ENCODE measurements at regions of chr1 and their contacts with region 1.

Region 1: DNA sequence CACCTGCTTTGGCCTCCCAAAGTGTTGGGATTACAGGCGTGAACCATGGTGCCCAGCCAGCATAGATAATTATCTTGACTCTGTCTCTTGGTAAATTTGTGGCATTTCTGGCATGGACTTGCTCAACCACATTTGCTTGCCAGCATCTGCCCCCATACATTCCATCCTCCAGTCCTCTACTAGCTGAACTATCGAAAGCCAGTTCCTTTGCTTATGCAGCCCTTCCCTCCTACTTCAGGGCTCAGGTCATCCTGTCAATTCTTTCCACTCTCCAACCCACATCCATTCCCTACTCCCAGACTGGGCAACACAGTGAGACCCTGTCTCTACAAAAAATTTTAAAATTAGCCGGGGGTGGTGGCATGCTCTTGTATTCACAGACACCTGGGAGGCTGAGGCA is 13.0 kb upstream of the UQCRHL start:
- DNase-seq: no peak
- H3K4me3 ChIP-seq: no peak overlapping the region
- H3K4me3 Mint-ChIP-seq: no peak overlapping the region
- H3K27ac Mint-ChIP-seq: no peak overlapping the region
- H3K4me1 ChIP-seq: no peaks in the 10 kb centered on the region
- H3K4me1 Mint-ChIP-seq: no peaks in the 10 kb centered on the region
- H3K27me3 ChIP-seq: no peaks in the 10 kb centered on the region
- H3K27me3 Mint-ChIP-seq: no peaks in the 10 kb centered on the region
- CTCF ChIP-seq: no peak

Region 2: GRCh38 chr1:15788624-15789301 is 31.7 kb before region 1 on chr1:
- CTCF ChIA-PET with region 1: interaction called, 14 read pairs
- POLR2A ChIA-PET with region 1: no interaction called
- intact Hi-C with region 1: loop called (anchors 2 kb)
- DNase-seq: no peak
- H3K4me3 ChIP-seq: no peak overlapping the region
- H3K4me3 Mint-ChIP-seq: no peak overlapping the region
- H3K27ac Mint-ChIP-seq: peak overlapping the region; percentile 71
- H3K4me1 ChIP-seq: peaks cover 44% of the 10 kb centered on the region
- H3K4me1 Mint-ChIP-seq: peaks cover 33% of the 10 kb centered on the region
- H3K27me3 ChIP-seq: no peaks in the 10 kb centered on the region
- H3K27me3 Mint-ChIP-seq: no peaks in the 10 kb centered on the region
- CTCF ChIP-seq: no peak

Region 3: DNA sequence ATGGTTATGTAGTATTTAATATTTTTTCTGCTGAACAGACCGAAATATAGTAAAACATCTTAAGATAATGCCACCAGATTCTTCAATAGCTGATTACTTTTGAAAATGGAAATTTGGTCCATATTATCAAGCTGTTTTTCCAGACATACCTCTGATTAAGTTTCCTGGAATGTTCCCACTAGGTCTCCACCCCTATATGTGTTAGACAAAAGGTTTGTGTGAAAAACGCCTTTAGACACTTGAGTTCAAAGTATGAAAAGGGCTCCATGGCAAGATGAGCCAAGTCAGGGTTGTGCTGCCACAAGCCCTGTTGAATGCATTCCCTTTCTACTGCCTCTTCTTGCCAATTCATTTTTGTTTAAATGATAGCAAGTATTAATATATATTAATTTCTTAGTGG is 102.8 kb after region 1 on chr1:
- CTCF ChIA-PET with region 1: interaction called, 3 read pairs
- POLR2A ChIA-PET with region 1: no interaction called
- intact Hi-C with region 1: loop called (anchors 5 kb)
- DNase-seq: no peak
- H3K4me3 ChIP-seq: no peak overlapping the region
- H3K4me3 Mint-ChIP-seq: no peak overlapping the region
- H3K27ac Mint-ChIP-seq: no peak overlapping the region
- H3K4me1 ChIP-seq: peaks cover 13% of the 10 kb centered on the region; the same call in 1 of the 2 replicates
- H3K4me1 Mint-ChIP-seq: no peaks in the 10 kb centered on the region
- H3K27me3 ChIP-seq: no peaks in the 10 kb centered on the region
- H3K27me3 Mint-ChIP-seq: no peaks in the 10 kb centered on the region
- CTCF ChIP-seq: no peak

Region 4: DNA sequence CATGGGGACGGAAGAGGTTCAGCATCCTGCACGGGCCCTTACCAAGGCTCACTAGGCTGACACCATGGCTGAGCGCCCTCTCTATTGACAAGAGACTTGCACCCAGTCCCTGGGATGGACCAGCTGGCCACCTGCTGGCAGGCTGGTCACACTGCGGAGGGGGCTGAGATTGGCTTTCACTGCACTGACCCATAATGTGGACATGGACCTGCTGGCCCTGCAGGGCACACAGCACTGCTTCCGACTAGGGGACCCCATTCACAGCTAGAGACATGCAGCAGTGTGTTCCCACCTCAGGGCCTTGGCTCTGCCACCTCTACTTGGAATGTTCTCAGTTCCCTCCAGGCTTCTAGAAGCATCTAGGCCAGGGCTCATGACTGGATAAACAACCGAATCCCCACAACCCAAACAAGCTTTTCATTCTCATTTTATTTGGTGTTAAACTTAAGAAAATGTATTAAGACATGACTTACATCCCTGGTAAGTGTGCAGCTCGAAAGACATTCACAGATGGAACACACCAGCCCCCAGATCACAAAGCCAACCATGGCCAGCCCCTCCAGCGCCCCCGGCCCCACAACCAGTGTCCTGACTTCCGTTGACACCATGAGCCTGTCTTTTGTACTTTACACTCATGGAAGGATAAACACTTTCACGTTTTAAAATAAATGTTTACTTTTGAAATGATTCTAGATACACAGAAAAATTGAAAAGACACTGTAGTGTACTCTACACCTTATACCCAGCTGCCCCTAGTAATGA is 174.3 kb after region 1 on chr1:
- CTCF ChIA-PET with region 1: interaction called, 5 read pairs
- POLR2A ChIA-PET with region 1: no interaction called
- intact Hi-C with region 1: loop called (anchors 1 kb)
- DNase-seq: peak; percentile 61 to 67
- H3K4me3 ChIP-seq: no peak overlapping the region
- H3K4me3 Mint-ChIP-seq: no peak overlapping the region
- H3K27ac Mint-ChIP-seq: no peak overlapping the region
- H3K4me1 ChIP-seq: no peaks in the 10 kb centered on the region
- H3K4me1 Mint-ChIP-seq: no peaks in the 10 kb centered on the region
- H3K27me3 ChIP-seq: no peaks in the 10 kb centered on the region
- H3K27me3 Mint-ChIP-seq: no peaks in the 10 kb centered on the region
- CTCF ChIP-seq: peak; percentile 56 to 74

Measured in Caco-2 (cell line).